ENCODE measurements at regions of chr11 and their contacts with region 1.

Region 1: GRCh38 chr11:73288873-73289707 is 17.0 kb downstream of the P2RY6 start:
- DNase-seq: peak; percentile 91
- ATAC-seq: peak; percentile 94
- H3K4me3 ChIP-seq: peak overlapping the region in 2 of 5 experiments; percentile 16 to 21
- H3K4me3 Mint-ChIP-seq: peak overlapping the region; percentile 85
- H3K27ac ChIP-seq: peak overlapping the region; percentile 67 to 71
- H3K27ac Mint-ChIP-seq: peak overlapping the region; percentile 89
- H3K4me1 ChIP-seq: peaks cover 23 to 32% of the 10 kb centered on the region in 2 donors
- H3K4me1 Mint-ChIP-seq: peaks cover 33% of the 10 kb centered on the region
- H3K27me3 ChIP-seq: peaks cover 0 to 11% (median 0%) of the 10 kb centered on the region in 4 experiments
- H3K27me3 Mint-ChIP-seq: peaks cover 6% of the 10 kb centered on the region
- CTCF ChIP-seq: peak; percentile 93

Region 2: DNA sequence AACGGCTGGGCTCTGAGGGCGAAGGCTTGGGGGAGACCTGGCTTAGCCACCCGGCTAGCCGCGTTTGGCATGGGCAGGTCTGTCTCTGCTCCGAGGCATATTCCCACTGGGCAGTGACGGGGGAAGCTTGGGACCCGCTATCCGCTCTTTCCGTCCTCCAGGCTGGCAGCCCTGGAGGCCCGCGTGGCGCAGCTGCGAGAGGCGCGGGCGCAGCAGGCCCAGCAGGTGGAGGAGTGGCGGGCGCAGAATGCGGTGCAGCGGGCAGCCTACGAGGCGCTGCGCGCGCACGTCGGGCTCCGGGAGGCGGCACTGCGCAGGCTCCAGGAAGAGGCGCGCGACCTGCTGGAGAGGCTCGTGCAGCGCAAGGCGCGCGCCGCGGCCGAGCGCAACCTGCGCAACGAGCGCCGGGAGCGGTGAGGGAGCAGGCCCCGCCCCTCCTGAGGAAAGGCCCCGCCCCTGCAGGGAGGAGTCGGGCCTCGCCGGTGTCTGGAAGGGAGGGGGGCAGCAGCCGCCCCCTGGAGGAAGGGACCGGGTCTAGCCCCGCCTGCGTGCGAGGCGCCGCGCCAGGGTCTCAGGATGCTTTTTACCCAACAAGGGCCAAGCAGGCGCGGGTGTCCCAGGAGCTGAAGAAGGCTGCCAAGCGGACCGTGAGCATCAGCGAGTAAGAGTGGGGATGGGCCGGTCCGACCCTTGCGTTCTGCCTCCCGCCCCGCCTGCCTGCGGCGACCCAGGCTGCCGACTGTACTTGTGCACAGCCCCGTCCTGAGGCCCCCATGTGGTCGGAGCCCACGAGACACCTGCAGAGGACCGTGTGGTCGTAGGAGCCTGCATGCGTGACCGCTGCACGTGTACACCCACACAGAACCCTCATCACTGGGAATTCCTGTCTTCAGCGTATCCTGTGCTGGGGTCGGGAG is 466.9 kb before region 1 on chr11:
- CTCF ChIA-PET with region 1: no interaction called
- POLR2A ChIA-PET with region 1: no interaction called
- intact Hi-C with region 1: loop called (anchors 2 kb)
- DNase-seq: peak; percentile 90
- ATAC-seq: peak; percentile 84
- H3K4me3 ChIP-seq: peak overlapping the region in 3 of 5 experiments; percentile 29 to 44 (median 43)
- H3K4me3 Mint-ChIP-seq: peak overlapping the region; percentile 69
- H3K27ac ChIP-seq: peak overlapping the region; percentile 59 to 86
- H3K27ac Mint-ChIP-seq: peak overlapping the region; percentile 95
- H3K4me1 ChIP-seq: peaks cover 16 to 33% of the 10 kb centered on the region in 2 donors
- H3K4me1 Mint-ChIP-seq: peaks cover 52% of the 10 kb centered on the region
- H3K27me3 ChIP-seq: no peaks in the 10 kb centered on the region
- H3K27me3 Mint-ChIP-seq: no peaks in the 10 kb centered on the region
- CTCF ChIP-seq: peak; percentile 52

Region 3: GRCh38 chr11:72939031-72939430 is 350.1 kb before region 1 on chr11:
- CTCF ChIA-PET with region 1: no interaction called
- POLR2A ChIA-PET with region 1: no interaction called
- intact Hi-C with region 1: no loop called
- DNase-seq: no peak
- ATAC-seq: no peak
- H3K4me3 ChIP-seq: no peak overlapping the region
- H3K4me3 Mint-ChIP-seq: no peak overlapping the region
- H3K27ac ChIP-seq: peak overlapping the region in 1 of 2 donors; percentile 55
- H3K27ac Mint-ChIP-seq: peak overlapping the region; percentile 3
- H3K4me1 ChIP-seq: peaks cover 17 to 24% of the 10 kb centered on the region in 2 donors
- H3K4me1 Mint-ChIP-seq: peaks cover 61% of the 10 kb centered on the region
- H3K27me3 ChIP-seq: no peaks in the 10 kb centered on the region
- H3K27me3 Mint-ChIP-seq: no peaks in the 10 kb centered on the region
- CTCF ChIP-seq: no peak

Region 4: DNA sequence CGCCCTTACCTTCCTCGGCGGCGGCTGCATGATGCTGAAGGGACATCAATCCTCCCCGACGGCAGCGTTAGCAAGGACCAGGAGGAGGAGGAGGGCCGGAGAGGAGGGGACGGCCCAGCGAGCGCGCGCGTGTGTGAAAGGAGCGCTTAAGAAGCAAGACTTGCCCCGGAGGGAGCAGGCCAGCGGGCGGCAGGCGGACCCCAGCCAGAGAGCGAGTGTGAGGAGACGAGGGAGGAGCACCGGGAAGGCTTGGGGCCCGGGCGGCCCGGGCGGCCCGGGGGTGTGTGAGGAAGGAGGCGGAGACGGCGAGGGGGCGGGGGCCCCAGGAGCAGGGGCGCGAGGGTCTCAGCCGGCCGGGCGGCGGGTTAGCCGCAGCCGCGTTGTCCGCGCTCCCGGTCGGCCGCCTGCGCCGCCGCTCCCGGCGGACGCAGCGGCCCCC is 147.2 kb before region 1 on chr11:
- CTCF ChIA-PET with region 1: interaction called, 3 read pairs
- POLR2A ChIA-PET with region 1: no interaction called
- intact Hi-C with region 1: loop called (anchors 2 kb)
- DNase-seq: peak; percentile 87
- ATAC-seq: peak; percentile 26
- H3K4me3 ChIP-seq: peak overlapping the region; percentile 84 to 98 (median 95)
- H3K4me3 Mint-ChIP-seq: peak overlapping the region; percentile 100
- H3K27ac ChIP-seq: peak overlapping the region; percentile 89 to 93
- H3K27ac Mint-ChIP-seq: peak overlapping the region; percentile 99
- H3K4me1 ChIP-seq: peaks cover 65 to 71% of the 10 kb centered on the region in 2 donors
- H3K4me1 Mint-ChIP-seq: peaks cover 76% of the 10 kb centered on the region
- H3K27me3 ChIP-seq: no peaks in the 10 kb centered on the region
- H3K27me3 Mint-ChIP-seq: no peaks in the 10 kb centered on the region
- CTCF ChIP-seq: no peak

Region 5: DNA sequence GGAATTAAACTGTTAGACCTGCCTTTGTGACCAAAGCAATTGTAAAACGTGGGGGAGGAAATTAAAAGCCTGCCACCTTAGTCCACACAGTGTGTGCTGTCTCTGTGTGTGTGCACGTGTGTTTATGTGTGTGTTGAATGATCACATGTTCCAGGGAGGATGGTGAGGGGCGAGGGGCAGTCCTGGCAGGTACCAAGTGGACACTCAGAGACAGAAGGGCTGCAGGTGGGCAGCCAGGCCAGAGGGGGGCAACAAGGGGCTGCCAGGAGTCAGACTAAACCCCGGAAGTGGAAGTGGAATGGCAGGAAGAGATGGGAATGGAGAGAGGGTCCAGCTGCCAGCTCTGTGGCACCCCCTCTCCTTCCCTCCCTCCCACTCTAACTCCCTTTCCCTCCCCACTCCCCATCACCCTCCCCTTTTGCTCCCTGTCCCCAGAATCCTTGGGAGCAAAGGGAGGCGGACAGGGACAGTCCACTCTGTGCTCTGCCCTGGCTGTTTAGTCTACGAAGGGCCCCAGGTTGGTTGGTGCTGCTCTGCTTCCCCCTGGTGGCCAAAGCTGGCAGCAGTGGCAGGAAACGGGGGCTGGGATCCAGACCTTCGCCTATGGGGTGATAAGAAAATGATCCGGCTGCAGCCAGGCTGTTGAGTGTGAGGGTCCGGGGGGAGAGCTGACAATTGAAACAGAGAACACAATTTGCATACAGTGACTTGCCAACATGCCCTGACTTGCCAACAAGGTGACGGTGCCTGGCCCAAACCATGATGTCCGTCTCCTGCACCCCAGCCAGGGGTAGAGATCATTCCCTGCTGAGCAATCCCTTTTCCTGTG is 46.6 kb before region 1 on chr11:
- CTCF ChIA-PET with region 1: interaction called, 5 read pairs
- POLR2A ChIA-PET with region 1: no interaction called
- intact Hi-C with region 1: loop called (anchors 2 kb)
- DNase-seq: peak; percentile 81
- ATAC-seq: peak; percentile 89
- H3K4me3 ChIP-seq: no peak overlapping the region
- H3K4me3 Mint-ChIP-seq: no peak overlapping the region
- H3K27ac ChIP-seq: no peak overlapping the region
- H3K27ac Mint-ChIP-seq: no peak overlapping the region
- H3K4me1 ChIP-seq: peaks cover 4 to 7% of the 10 kb centered on the region in 2 donors
- H3K4me1 Mint-ChIP-seq: peaks cover 6% of the 10 kb centered on the region
- H3K27me3 ChIP-seq: peaks cover 0 to 2% (median 0%) of the 10 kb centered on the region in 4 experiments
- H3K27me3 Mint-ChIP-seq: peaks cover 3% of the 10 kb centered on the region
- CTCF ChIP-seq: peak; percentile 79

Region 6: DNA sequence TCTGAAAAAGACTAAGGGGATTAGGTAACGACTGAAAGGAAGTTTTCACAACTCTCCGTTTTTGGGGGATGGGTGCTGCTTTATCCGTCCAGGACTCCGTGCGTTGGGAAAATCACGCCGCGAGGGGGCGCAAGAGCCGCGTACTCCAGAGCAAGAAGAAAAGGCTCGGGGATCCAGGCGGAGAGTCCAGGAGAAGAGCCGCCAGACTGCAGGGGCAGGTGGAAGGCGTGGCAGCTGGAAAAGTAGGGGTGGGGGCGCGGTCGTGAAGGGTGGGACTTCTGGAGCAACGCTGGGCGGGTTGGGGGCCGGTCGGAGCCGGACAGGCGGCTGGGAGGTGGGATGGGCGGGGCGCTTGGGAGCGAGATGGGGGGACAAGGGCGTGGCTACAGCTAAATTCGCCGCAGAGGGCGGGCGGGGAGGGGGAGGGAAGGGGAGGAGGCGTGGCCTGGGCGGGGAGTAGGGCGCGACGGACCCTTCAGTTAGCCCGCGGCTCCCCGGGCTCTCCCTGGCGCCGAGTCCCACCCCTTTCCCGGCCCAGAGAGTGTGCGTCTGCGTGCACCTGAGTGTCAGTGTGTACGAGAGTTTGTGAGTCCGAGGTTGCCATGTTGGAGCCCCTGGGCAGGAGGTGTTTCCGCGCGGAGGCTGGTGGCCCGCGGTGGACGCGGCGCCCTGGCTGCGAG is 18.4 kb after region 1 on chr11:
- CTCF ChIA-PET with region 1: interaction called, 29 read pairs
- POLR2A ChIA-PET with region 1: no interaction called
- intact Hi-C with region 1: loop called (anchors 2 kb)
- DNase-seq: peak; percentile 91
- ATAC-seq: peak; percentile 76
- H3K4me3 ChIP-seq: peak overlapping the region; percentile 51 to 84 (median 65)
- H3K4me3 Mint-ChIP-seq: peak overlapping the region; percentile 89
- H3K27ac ChIP-seq: no peak overlapping the region
- H3K27ac Mint-ChIP-seq: peak overlapping the region; percentile 51
- H3K4me1 ChIP-seq: peaks cover 20 to 25% of the 10 kb centered on the region in 2 donors
- H3K4me1 Mint-ChIP-seq: peaks cover 13% of the 10 kb centered on the region
- H3K27me3 ChIP-seq: peaks cover 0 to 52% (median 18%) of the 10 kb centered on the region in 4 experiments
- H3K27me3 Mint-ChIP-seq: peaks cover 24% of the 10 kb centered on the region
- CTCF ChIP-seq: peak; percentile 72

Region 7: GRCh38 chr11:73325036-73325981 is 36.2 kb after region 1 on chr11:
- CTCF ChIA-PET with region 1: no interaction called
- POLR2A ChIA-PET with region 1: no interaction called
- intact Hi-C with region 1: no loop called
- DNase-seq: no peak
- ATAC-seq: no peak
- H3K4me3 ChIP-seq: no peak overlapping the region
- H3K4me3 Mint-ChIP-seq: no peak overlapping the region
- H3K27ac ChIP-seq: no peak overlapping the region
- H3K27ac Mint-ChIP-seq: no peak overlapping the region
- H3K4me1 ChIP-seq: peaks cover 17 to 25% of the 10 kb centered on the region in 2 donors
- H3K4me1 Mint-ChIP-seq: peaks cover 23% of the 10 kb centered on the region
- H3K27me3 ChIP-seq: peaks cover 0 to 3% (median 0%) of the 10 kb centered on the region in 4 experiments
- H3K27me3 Mint-ChIP-seq: no peaks in the 10 kb centered on the region
- CTCF ChIP-seq: no peak

Region 8: DNA sequence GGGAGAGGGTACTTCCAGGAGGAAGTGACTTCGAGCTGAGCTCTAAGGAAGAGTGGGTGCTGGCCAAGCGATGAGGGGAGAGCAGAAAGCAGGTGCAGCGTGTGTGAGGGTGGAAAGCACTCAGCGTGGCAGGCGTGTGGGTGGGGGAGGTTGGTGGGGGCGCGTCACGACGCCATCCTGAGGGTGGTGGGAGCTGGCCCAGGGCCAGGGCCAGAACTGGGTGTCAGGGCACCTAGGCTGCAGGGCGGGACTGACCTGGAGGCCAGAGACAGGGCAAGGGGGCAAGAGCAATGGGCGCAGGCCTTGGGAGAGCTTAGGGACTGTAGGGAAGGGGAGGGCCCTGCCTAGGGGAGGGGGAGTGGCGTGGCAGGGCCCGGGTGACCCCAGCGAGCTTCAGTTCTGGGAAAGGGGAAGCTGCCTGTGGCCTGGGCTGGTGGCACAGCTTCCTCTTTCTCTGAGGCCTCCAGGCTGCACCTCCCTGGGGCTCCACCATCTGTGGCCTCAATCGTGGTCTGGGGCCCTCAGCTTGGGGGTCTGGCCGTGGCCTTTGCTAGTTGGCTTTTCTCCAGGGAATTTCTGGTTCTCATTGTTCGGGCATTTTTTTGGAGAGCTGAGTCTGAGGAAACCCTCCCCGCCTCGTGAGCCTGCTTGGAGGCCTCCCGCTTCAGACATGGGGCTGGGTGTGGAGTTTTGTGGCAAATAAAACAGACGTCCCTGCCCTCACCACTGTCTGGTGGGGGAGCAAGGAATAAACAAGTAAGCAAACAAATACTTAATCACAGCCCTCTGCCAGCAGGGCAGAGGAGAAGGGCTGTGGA is 96.0 kb after region 1 on chr11:
- CTCF ChIA-PET with region 1: no interaction called
- POLR2A ChIA-PET with region 1: no interaction called
- intact Hi-C with region 1: loop called (anchors 5 kb)
- DNase-seq: peak; percentile 96
- ATAC-seq: peak; percentile 69
- H3K4me3 ChIP-seq: peak overlapping the region in 4 of 5 experiments; percentile 31 to 58 (median 42)
- H3K4me3 Mint-ChIP-seq: peak overlapping the region; percentile 100
- H3K27ac ChIP-seq: peak overlapping the region; percentile 98
- H3K27ac Mint-ChIP-seq: peak overlapping the region; percentile 99
- H3K4me1 ChIP-seq: peaks cover 100% of the 10 kb centered on the region in 2 donors
- H3K4me1 Mint-ChIP-seq: peaks cover 99% of the 10 kb centered on the region
- H3K27me3 ChIP-seq: no peaks in the 10 kb centered on the region
- H3K27me3 Mint-ChIP-seq: no peaks in the 10 kb centered on the region
- CTCF ChIP-seq: no peak

Measured in B cell (primary cell).